ENCODE measurements at regions of chr15 and their contacts with region 1.

Region 1: DNA sequence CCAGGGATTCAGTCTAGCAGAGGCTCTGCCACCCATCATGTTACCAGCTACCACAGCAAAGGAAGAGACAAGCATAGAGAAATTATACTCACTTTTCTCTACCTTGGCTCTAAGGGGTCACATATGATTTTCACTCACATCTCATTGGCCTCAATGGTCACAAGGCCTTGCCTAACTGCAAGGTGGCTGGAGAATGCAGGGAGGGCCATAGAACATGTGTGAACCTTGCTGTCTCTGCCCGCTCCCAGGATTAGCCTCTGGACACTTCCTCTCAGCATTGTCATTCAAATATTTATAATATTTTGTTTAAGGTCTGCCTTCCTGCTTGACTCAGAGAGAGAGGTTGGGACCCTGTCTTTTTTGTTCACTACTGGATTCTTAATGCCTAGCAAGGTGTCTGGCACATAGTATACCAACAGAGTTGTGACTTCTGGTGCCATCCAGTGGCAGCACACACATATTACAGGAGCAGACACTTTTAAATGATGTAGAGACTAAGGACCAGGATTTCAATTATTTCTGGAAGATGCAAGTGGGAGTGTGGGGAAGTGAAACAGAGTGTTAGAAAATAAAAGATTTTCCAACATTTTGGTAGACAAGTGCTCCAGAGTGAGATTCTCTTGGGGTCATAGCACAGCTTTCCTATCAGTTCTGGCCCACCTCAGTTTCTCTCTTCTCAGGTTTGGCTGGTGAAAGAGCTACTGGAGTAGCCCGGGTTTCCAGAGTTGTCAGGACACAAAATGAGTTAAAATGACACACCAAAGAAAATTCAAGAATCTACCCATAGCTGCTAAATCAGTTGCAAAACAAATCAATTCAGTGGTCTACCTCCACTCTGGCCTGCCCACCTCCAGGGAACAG is 119.0 kb upstream of the RASGRP1 start:
- DNase-seq: peak; percentile 54
- H3K4me3 ChIP-seq: no peak overlapping the region
- H3K27ac ChIP-seq: no peak overlapping the region
- H3K4me1 ChIP-seq: no peaks in the 10 kb centered on the region
- H3K27me3 ChIP-seq: no peaks in the 10 kb centered on the region
- CTCF ChIP-seq: peak; percentile 84

Region 2: GRCh38 chr15:38440353-38441129 is 243.1 kb before region 1 on chr15:
- CTCF ChIA-PET with region 1: interaction called, 5 read pairs
- POLR2A ChIA-PET with region 1: no interaction called
- intact Hi-C with region 1: loop called (anchors 1 kb)
- DNase-seq: peak; percentile 63
- H3K4me3 ChIP-seq: no peak overlapping the region
- H3K27ac ChIP-seq: no peak overlapping the region
- H3K4me1 ChIP-seq: no peaks in the 10 kb centered on the region
- H3K27me3 ChIP-seq: peaks cover 24% of the 10 kb centered on the region
- CTCF ChIP-seq: peak; percentile 97

Region 3: DNA sequence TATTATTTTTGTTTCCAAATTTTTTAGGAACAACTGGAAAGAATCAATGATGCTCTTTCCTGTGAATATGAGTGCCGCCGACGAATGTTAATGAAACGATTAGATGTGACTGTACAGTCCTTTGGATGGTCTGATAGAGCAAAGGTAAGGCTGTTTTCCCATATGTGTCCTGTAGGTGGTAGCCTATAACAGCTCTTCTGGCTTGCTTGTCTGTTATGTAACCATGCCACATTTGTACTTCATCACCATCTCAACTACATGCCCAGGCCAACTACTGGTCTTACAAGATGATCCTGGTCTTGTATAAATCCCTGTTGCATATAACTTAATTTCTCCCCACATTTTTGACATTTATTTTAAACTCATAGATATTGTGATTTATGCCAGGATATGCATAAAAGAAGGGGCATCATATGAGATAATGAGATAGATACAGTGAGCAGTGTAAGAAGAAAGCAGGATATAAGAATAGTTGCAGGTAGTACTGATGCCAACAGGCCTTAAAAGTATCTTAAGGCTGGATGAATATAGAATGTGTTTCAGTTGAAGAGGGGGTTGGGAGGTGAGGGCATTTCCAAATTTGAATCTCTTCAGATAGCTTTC is 209.4 kb before region 1 on chr15:
- CTCF ChIA-PET with region 1: no interaction called
- POLR2A ChIA-PET with region 1: no interaction called
- intact Hi-C with region 1: loop called (anchors 10 kb)
- DNase-seq: peak; percentile 51
- H3K4me3 ChIP-seq: no peak overlapping the region
- H3K27ac ChIP-seq: no peak overlapping the region
- H3K4me1 ChIP-seq: no peaks in the 10 kb centered on the region
- H3K27me3 ChIP-seq: no peaks in the 10 kb centered on the region
- CTCF ChIP-seq: peak; percentile 66